Psoas muscle (tissue), 8 donors: ENCODE measurements at regions of chr20 and their contacts with region 1.

Region 1: GRCh38 chr20:20950620-20951019 is 155.5 kb downstream of the LINC00237 start:
- DNase-seq: no peak
- ATAC-seq: no peak
- H3K4me3 ChIP-seq: no peak overlapping the region
- H3K27ac ChIP-seq: no peak overlapping the region
- H3K4me1 ChIP-seq: no peaks in the 10 kb centered on the region
- H3K27me3 ChIP-seq: peaks cover 0 to 8% (median 5%) of the 10 kb centered on the region in 3 donors
- CTCF ChIP-seq: no peak

Region 2: GRCh38 chr20:20624914-20625313 is 325.7 kb before region 1 on chr20:
- intact Hi-C with region 1: no loop called
- DNase-seq: no peak
- ATAC-seq: no peak
- H3K4me3 ChIP-seq: no peak overlapping the region
- H3K27ac ChIP-seq: no peak overlapping the region
- H3K4me1 ChIP-seq: peaks cover 9% of the 10 kb centered on the region
- H3K27me3 ChIP-seq: no peaks in the 10 kb centered on the region
- CTCF ChIP-seq: no peak

Region 3: GRCh38 chr20:20969701-20970280 is 19.2 kb after region 1 on chr20:
- intact Hi-C with region 1: loop called in 1 of 2 experiments (anchors 2 kb)
- DNase-seq: no peak
- ATAC-seq: no peak
- H3K4me3 ChIP-seq: no peak overlapping the region
- H3K27ac ChIP-seq: no peak overlapping the region
- H3K4me1 ChIP-seq: no peaks in the 10 kb centered on the region
- H3K27me3 ChIP-seq: peaks cover 0 to 4% (median 1%) of the 10 kb centered on the region in 3 donors
- CTCF ChIP-seq: no peak